OCI-LY7 (cell line): ENCODE measurements at regions of chr6 and their contacts with region 1.

Region 1: DNA sequence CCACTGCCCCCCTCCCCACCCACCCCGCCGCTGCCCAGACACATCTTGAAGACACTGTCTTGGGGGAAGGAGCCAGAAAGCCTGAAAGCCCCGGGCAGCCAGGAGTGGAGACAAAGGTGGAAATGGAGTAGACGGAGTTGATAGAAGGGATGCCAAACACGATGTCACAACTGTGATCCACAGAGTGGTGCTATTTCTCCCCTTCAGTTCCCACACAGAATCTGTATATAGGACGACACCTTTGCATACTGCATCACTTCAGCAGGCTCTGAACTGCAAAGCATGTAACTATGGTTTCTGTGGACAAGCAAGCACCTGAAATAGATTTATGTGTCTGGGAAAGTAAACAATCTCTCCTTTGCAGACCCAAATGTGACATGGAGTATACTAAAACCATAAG is 56.4 kb upstream of the F13A1 start:
- DNase-seq: peak; percentile 29
- H3K4me3 ChIP-seq: no peak overlapping the region
- H3K27ac ChIP-seq: no peak overlapping the region
- H3K4me1 ChIP-seq: peaks cover 29% of the 10 kb centered on the region
- CTCF ChIP-seq: 0 out of 2 replicates have a peak, but pooled peaks have one; percentile 13

Region 2: DNA sequence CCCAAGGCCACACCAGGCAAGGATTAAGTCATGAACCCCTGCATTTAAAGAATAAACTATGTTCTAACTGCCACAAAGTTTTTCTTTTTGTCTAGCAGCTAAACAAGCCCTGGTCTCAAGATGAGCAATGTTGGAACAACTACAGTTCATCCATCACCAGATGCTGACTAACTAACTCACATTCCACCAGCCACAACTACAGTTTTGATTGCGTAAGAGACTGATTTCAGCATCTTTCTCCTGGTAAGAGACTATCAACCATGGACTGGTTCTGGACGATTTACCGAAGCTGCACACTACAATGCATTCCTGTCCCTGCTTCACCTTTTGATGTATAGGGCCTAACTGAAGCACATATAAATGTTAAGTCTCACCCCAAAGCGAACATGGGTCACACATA is 99.4 kb before region 1 on chr6:
- CTCF ChIA-PET with region 1: no interaction called
- POLR2A ChIA-PET with region 1: no interaction called
- intact Hi-C with region 1: no loop called
- DNase-seq: no peak
- H3K4me3 ChIP-seq: no peak overlapping the region
- H3K27ac ChIP-seq: no peak overlapping the region
- H3K4me1 ChIP-seq: no peaks in the 10 kb centered on the region
- CTCF ChIP-seq: no peak

Region 3: GRCh38 chr6:6362056-6362840 is 14.6 kb before region 1 on chr6:
- CTCF ChIA-PET with region 1: no interaction called
- POLR2A ChIA-PET with region 1: interaction called, 12 read pairs
- intact Hi-C with region 1: no loop called
- DNase-seq: peak; percentile 75
- H3K4me3 ChIP-seq: peak overlapping the region; percentile 34
- H3K27ac ChIP-seq: peak overlapping the region; percentile 64
- H3K4me1 ChIP-seq: peaks cover 38% of the 10 kb centered on the region
- CTCF ChIP-seq: no peak

Region 4: DNA sequence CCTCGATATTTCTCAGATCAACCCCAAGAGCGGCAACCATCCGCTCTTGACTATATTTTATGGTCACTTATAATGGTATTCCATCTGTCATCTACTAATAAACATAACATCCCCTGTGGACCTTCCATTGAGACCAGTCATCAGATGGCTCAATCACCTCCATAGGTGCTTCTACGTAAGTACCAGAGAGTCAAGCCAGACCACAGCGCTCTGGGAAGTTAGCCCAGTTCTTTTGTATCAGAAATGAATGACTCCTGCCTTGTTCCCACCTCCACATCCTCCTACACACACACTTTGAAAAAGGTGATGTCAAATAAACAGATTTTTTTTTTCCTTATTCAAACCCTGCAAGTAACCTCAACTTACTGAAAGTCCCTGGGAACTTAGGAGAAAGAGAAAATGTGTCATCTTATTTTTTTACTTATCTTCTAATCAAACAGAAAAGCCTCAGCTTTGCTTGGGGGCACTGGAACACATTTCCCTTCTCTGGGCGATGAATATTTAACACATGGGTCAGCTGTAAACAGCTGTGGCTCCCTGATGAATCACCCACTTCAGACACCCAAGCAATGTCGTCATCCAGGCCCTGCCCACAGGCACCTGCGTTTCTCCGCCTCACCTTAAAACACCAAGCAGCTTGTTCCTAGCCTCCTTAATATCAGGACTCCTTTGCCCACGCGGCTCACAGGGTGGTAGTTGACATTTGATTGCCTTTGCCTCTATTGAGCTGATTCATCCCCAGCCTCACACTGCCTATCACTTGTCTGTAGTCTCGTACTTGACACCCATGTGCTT is 90.3 kb after region 1 on chr6:
- CTCF ChIA-PET with region 1: no interaction called
- POLR2A ChIA-PET with region 1: no interaction called
- intact Hi-C with region 1: no loop called
- DNase-seq: no peak
- H3K4me3 ChIP-seq: no peak overlapping the region
- H3K27ac ChIP-seq: no peak overlapping the region
- H3K4me1 ChIP-seq: peaks cover 13% of the 10 kb centered on the region
- CTCF ChIP-seq: no peak